ENCODE measurements at regions of chr15 and their contacts with region 1.

Region 1: GRCh38 chr15:57527382-57528091 is 64.2 kb upstream of the MYZAP start:
- DNase-seq: peak; percentile 74
- H3K4me3 ChIP-seq: no peak overlapping the region
- H3K27ac ChIP-seq: peak overlapping the region; percentile 54 to 85
- H3K4me1 ChIP-seq: peaks cover 33% of the 10 kb centered on the region
- H3K27me3 ChIP-seq: no peaks in the 10 kb centered on the region
- CTCF ChIP-seq: peak; percentile 46 to 92 (median 84)
- POLR2A ChIP-seq: no peak

Region 2: GRCh38 chr15:57340682-57341259 is 186.8 kb before region 1 on chr15:
- intact Hi-C with region 1: loop called (anchors 2 kb)
- DNase-seq: peak; percentile 57
- H3K4me3 ChIP-seq: no peak overlapping the region
- H3K27ac ChIP-seq: no peak overlapping the region
- H3K4me1 ChIP-seq: no peaks in the 10 kb centered on the region
- H3K27me3 ChIP-seq: no peaks in the 10 kb centered on the region
- CTCF ChIP-seq: peak; percentile 57 to 91 (median 84)
- POLR2A ChIP-seq: no peak

Region 3: DNA sequence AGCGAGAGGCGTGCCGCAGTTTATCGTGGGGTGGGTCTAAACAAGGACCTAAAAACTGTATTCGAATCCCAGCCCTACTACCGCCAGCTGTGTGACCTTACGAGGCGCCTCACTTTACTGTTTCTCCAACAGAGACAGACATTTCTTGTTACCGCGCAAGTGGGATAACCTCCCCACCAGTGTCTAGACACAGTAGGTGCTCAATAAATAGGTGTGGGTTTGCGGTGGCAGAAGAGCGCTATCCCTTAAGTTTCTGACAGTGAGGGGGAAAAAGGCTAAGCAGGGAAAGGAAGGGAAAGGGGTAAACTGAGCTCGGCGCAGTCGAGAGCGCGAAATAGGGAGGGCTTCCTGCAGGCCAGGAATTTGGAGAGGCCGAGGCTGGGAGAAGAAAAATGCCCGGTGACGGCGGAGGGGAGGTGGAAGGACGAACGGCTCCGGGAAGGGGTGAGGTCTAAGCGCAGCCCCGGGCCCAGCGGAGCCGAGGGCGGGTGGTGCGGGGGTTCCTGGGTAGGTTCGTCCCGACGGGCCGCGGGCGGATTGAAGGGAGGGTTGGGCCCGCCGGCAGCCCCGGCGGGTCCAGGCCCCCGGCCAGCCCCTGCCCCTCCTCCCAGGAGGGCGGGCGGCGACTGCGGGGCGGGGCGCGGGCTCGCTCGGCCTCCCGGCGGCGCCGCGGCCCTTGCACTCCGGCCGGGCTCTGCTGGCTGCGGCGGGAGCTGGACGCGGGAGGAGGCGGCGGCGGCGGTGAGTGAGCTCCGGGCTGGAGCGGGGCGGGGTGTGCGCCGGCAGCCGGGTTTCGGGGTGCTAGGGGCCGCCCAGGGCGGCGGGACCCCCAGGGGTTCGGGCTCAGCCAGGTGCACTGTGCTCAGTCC is 151.5 kb before region 1 on chr15 and contains the start of gene CGNL1:
- intact Hi-C with region 1: loop called (anchors 10 kb)
- DNase-seq: peak; percentile 51
- H3K4me3 ChIP-seq: peak within 1 kb of the TSS; percentile 91 to 97
- H3K27ac ChIP-seq: peak within 1 kb of the TSS; percentile 95 to 96
- H3K4me1 ChIP-seq: peaks cover 3% of the 10 kb centered on the region
- H3K27me3 ChIP-seq: no peaks in the 10 kb centered on the region
- CTCF ChIP-seq: no peak
- POLR2A ChIP-seq: peak; percentile 47
- total RNA-seq, gene CGNL1: 49.0 to 65.6 TPM

Region 4: DNA sequence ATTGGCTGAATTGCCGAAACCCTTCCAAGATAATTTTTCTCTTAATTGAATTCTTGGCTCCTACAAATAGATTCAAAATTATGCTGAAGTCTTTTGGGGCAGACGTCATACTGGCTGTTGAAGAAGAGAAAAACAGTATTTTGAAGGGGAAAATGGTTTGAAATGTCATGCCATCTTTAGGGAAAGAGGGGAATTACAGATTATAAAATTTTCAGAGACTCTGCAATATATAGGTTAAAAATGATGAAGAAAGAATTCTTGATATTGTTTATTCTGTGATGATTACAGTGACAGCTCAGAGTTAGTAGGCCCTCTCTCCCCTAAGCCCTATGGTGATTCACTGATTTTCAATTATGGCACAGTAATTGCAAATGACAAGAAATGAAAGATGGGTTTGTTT is 65.2 kb before region 1 on chr15:
- intact Hi-C with region 1: loop called (anchors 5 kb)
- DNase-seq: no peak
- H3K4me3 ChIP-seq: no peak overlapping the region
- H3K27ac ChIP-seq: peak overlapping the region in 1 of 2 donors; percentile 41
- H3K4me1 ChIP-seq: no peaks in the 10 kb centered on the region
- H3K27me3 ChIP-seq: no peaks in the 10 kb centered on the region
- CTCF ChIP-seq: peak in 1 of 4 experiments; percentile 7
- POLR2A ChIP-seq: no peak

Region 5: GRCh38 chr15:57611938-57612337 is 84.4 kb after region 1 on chr15:
- intact Hi-C with region 1: no loop called
- DNase-seq: peak; percentile 90
- H3K4me3 ChIP-seq: no peak overlapping the region
- H3K27ac ChIP-seq: peak overlapping the region; percentile 65 to 74
- H3K4me1 ChIP-seq: peaks cover 15% of the 10 kb centered on the region
- H3K27me3 ChIP-seq: no peaks in the 10 kb centered on the region
- CTCF ChIP-seq: peak; percentile 24 to 87 (median 69)
- POLR2A ChIP-seq: no peak

Measured in prostate gland (tissue), 2 donors.